Adrenal gland (tissue), 19 donors: ENCODE measurements at regions of chr22 and their contacts with region 1.

Region 1: GRCh38 chr22:17785185-17786184 is 11.2 kb upstream of the BID start:
- DNase-seq: peak; percentile 60 to 83 (median 75)
- H3K4me3 ChIP-seq: no peak overlapping the region
- H3K27ac ChIP-seq: peak overlapping the region in 2 of 5 donors; percentile 42 to 45
- H3K4me1 ChIP-seq: peaks cover 0 to 7% of the 10 kb centered on the region in 2 donors
- H3K27me3 ChIP-seq: no peaks in the 10 kb centered on the region
- CTCF ChIP-seq: peak; percentile 41 to 68 (median 54)
- POLR2A ChIP-seq: no peak

Region 2: GRCh38 chr22:17552737-17553136 is 232.7 kb before region 1 on chr22:
- intact Hi-C with region 1: loop called in 1 of 2 experiments (anchors 10 kb)
- DNase-seq: no peak
- H3K4me3 ChIP-seq: no peak overlapping the region
- H3K27ac ChIP-seq: no peak overlapping the region
- H3K4me1 ChIP-seq: no peaks in the 10 kb centered on the region
- H3K27me3 ChIP-seq: no peaks in the 10 kb centered on the region
- CTCF ChIP-seq: no peak
- POLR2A ChIP-seq: no peak